ENCODE measurements at regions of chr4 and their contacts with region 1.

Region 1: GRCh38 chr4:169659716-169660670 is 39.6 kb downstream of the CLCN3 start:
- DNase-seq: peak; percentile 94
- H3K4me3 ChIP-seq: peak overlapping the region; percentile 31 to 48
- H3K27ac ChIP-seq: peak overlapping the region; percentile 78 to 91
- H3K4me1 ChIP-seq: peaks cover 2% of the 10 kb centered on the region
- H3K27me3 ChIP-seq: no peaks in the 10 kb centered on the region
- CTCF ChIP-seq: peak in 1 of 4 experiments; percentile 6
- POLR2A ChIP-seq: peak; percentile 45

Region 2: GRCh38 chr4:169619959-169620879 is 39.8 kb before region 1 on chr4 and contains the start of gene CLCN3:
- intact Hi-C with region 1: loop called (anchors 5 kb)
- DNase-seq: peak; percentile 97
- H3K4me3 ChIP-seq: peak within 1 kb of the TSS; percentile 64 to 69
- H3K27ac ChIP-seq: peak within 1 kb of the TSS; percentile 98 to 99
- H3K4me1 ChIP-seq: peaks cover 2% of the 10 kb centered on the region
- H3K27me3 ChIP-seq: no peaks in the 10 kb centered on the region
- CTCF ChIP-seq: peak in 3 of 4 experiments; percentile 5 to 77 (median 49)
- POLR2A ChIP-seq: peak; percentile 97
- total RNA-seq, gene CLCN3: 67.2 to 96.4 TPM

Region 3: GRCh38 chr4:169757575-169758184 is 97.7 kb after region 1 on chr4 and contains the start of gene HPF1:
- intact Hi-C with region 1: loop called (anchors 5 kb)
- DNase-seq: peak; percentile 91
- H3K4me3 ChIP-seq: peak within 1 kb of the TSS; percentile 74 to 78
- H3K27ac ChIP-seq: peak within 1 kb of the TSS; percentile 71 to 73
- H3K4me1 ChIP-seq: peaks cover 4% of the 10 kb centered on the region
- H3K27me3 ChIP-seq: no peaks in the 10 kb centered on the region
- CTCF ChIP-seq: peak in 1 of 4 experiments; percentile 29
- POLR2A ChIP-seq: peak; percentile 67
- total RNA-seq, gene HPF1: 24.5 to 48.9 TPM

Region 4: GRCh38 chr4:170198747-170199146 is 538.8 kb after region 1 on chr4:
- intact Hi-C with region 1: no loop called
- DNase-seq: no peak
- H3K4me3 ChIP-seq: no peak overlapping the region
- H3K27ac ChIP-seq: no peak overlapping the region
- H3K4me1 ChIP-seq: no peaks in the 10 kb centered on the region
- H3K27me3 ChIP-seq: no peaks in the 10 kb centered on the region
- CTCF ChIP-seq: peak in 1 of 4 experiments; percentile 10
- POLR2A ChIP-seq: no peak